ENCODE measurements at regions of chr3 and their contacts with region 1.

Region 1: GRCh38 chr3:61704807-61705206 is 143.4 kb downstream of the PTPRG start:
- DNase-seq: no peak
- ATAC-seq: no peak
- H3K4me3 ChIP-seq: no peak overlapping the region
- H3K27ac ChIP-seq: no peak overlapping the region
- H3K4me1 ChIP-seq: peaks cover 0 to 42% (median 8%) of the 10 kb centered on the region in 12 donors
- H3K27me3 ChIP-seq: no peaks in the 10 kb centered on the region
- CTCF ChIP-seq: no peak
- POLR2A ChIP-seq: no peak

Region 2: GRCh38 chr3:61594144-61594963 is 110.5 kb before region 1 on chr3:
- intact Hi-C with region 1: no loop called
- DNase-seq: no peak
- ATAC-seq: peak; percentile 55 to 79 (median 76)
- H3K4me3 ChIP-seq: peak overlapping the region in 7 of 12 donors; percentile 1 to 42 (median 23)
- H3K27ac ChIP-seq: peak overlapping the region in 11 of 12 donors; percentile 3 to 54 (median 38)
- H3K4me1 ChIP-seq: peaks cover 10 to 69% (median 37%) of the 10 kb centered on the region in 12 donors
- H3K27me3 ChIP-seq: no peaks in the 10 kb centered on the region
- CTCF ChIP-seq: no peak
- POLR2A ChIP-seq: no peak

Region 3: GRCh38 chr3:61715886-61716527 is 11.2 kb after region 1 on chr3:
- intact Hi-C with region 1: loop called in 1 of 10 experiments (anchors 1 kb)
- DNase-seq: no peak
- ATAC-seq: no peak
- H3K4me3 ChIP-seq: no peak overlapping the region
- H3K27ac ChIP-seq: no peak overlapping the region
- H3K4me1 ChIP-seq: peaks cover 3 to 35% (median 20%) of the 10 kb centered on the region in 12 donors
- H3K27me3 ChIP-seq: no peaks in the 10 kb centered on the region
- CTCF ChIP-seq: no peak
- POLR2A ChIP-seq: no peak